ENCODE measurements at regions of chr22 and their contacts with region 1.

Region 1: DNA sequence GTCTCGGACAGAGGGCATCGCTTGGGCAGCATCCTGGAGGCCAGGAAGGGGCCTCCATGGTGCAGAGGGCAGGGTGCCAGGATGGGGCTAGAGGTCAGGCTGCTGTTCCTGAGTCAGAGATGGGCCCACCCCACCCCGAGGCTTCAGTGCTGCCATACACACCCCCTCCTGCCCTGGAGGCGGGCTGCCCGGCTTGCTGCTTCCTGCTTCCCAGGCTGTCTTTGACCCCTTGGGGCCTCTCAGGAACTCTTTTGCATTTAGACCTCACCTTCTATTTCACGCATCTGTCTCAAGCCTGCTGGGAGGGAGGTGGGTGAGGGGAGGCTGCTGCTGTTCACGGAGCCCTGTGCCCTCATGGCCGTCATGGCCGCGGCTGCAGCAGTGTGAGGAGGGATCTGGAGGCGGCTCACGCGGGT is 6.6 kb upstream of the GRAMD4 start:
- DNase-seq: peak; percentile 28
- ATAC-seq: peak; percentile 69
- H3K4me3 ChIP-seq: peak overlapping the region; percentile 60
- H3K27ac ChIP-seq: peak overlapping the region; percentile 83
- H3K4me1 ChIP-seq: peaks cover 19% of the 10 kb centered on the region
- H3K27me3 ChIP-seq: no peaks in the 10 kb centered on the region
- CTCF ChIP-seq: no peak
- EP300 ChIP-seq: 0 out of 4 replicates have a peak, but pooled peaks of 1 of the 2 experiments have one; percentile 10
- POLR2A ChIP-seq: 0 out of 2 replicates have a peak, but pooled peaks have one; percentile 45
- RAD21 ChIP-seq: no peak

Region 2: GRCh38 chr22:46576556-46577367 is 36.9 kb before region 1 on chr22:
- CTCF ChIA-PET with region 1: no interaction called
- POLR2A ChIA-PET with region 1: interaction called, 3 read pairs
- RAD21 ChIA-PET with region 1: interaction called, 3 read pairs
- SMC1A ChIA-PET with region 1: interaction called, 3 read pairs
- in situ Hi-C with region 1: no loop called
- intact Hi-C with region 1: loop called (anchors 5 kb)
- DNase-seq: no peak
- ATAC-seq: peak; percentile 9; the same call in 2 of the 3 replicates
- H3K4me3 ChIP-seq: no peak overlapping the region; the same call in 1 of the 2 replicates
- H3K27ac ChIP-seq: no peak overlapping the region
- H3K4me1 ChIP-seq: peaks cover 15% of the 10 kb centered on the region
- H3K27me3 ChIP-seq: no peaks in the 10 kb centered on the region; a peak in 1 of 4 replicates
- CTCF ChIP-seq: no peak
- EP300 ChIP-seq: no peak
- POLR2A ChIP-seq: 0 out of 2 replicates have a peak, but pooled peaks have one; percentile 37
- RAD21 ChIP-seq: no peak

Region 3: DNA sequence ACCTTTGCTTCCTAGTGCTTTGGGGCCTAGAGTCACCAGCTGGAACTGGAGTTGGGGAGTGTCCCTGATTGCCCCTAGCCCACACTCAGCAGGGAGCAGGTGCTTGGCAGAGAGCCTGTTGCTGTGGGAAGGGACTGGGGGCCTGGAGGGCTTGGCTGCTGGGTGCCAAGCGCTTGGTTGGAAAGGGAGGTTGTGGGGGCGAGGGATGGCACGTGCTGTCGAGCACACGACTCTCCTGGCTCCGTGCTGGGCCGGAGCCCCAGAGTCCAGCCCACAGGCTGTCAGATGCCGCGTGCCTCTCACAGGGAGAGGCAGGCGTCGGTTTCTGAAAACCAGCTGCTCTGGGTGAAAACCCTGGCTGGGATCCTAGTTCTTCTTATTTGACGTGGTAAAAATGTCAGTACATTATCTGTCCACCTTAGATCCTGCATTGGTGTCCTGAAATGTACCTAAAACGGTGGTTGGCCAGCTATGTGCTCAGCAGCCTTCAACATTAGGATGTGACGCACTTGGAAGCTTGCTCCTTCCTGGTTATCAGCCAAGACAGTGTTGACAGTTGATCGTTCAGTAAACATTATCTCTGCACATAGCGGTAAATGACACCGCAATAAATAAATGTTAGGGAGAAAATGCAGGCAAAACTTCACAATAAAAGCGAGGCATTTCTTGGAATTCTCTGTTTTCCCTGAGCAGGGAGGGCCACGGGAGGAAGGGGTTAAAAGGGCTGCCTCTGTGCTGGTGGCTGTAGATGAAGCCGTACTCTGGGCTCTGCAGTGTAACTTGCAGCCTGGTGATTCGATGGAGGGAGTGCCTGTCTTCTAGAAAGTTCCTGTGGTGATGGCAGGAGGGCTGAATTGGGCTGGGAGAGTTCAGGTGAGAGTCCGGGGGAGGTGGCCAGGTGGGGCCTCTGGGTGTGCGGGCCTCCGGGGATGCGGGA is 35.8 kb after region 1 on chr22:
- CTCF ChIA-PET with region 1: no interaction called
- POLR2A ChIA-PET with region 1: no interaction called
- RAD21 ChIA-PET with region 1: no interaction called
- SMC1A ChIA-PET with region 1: no interaction called
- in situ Hi-C with region 1: no loop called
- intact Hi-C with region 1: no loop called
- DNase-seq: no peak
- ATAC-seq: no peak
- H3K4me3 ChIP-seq: no peak overlapping the region
- H3K27ac ChIP-seq: no peak overlapping the region
- H3K4me1 ChIP-seq: peaks cover 7% of the 10 kb centered on the region
- H3K27me3 ChIP-seq: no peaks in the 10 kb centered on the region
- CTCF ChIP-seq: no peak
- EP300 ChIP-seq: no peak
- POLR2A ChIP-seq: no peak
- RAD21 ChIP-seq: no peak

Region 4: GRCh38 chr22:46674367-46674781 is 60.8 kb after region 1 on chr22:
- CTCF ChIA-PET with region 1: no interaction called
- POLR2A ChIA-PET with region 1: no interaction called
- RAD21 ChIA-PET with region 1: no interaction called
- SMC1A ChIA-PET with region 1: no interaction called
- in situ Hi-C with region 1: no loop called
- intact Hi-C with region 1: no loop called
- DNase-seq: no peak
- ATAC-seq: no peak
- H3K4me3 ChIP-seq: no peak overlapping the region
- H3K27ac ChIP-seq: no peak overlapping the region
- H3K4me1 ChIP-seq: peaks cover 8% of the 10 kb centered on the region
- H3K27me3 ChIP-seq: no peaks in the 10 kb centered on the region
- CTCF ChIP-seq: no peak
- EP300 ChIP-seq: no peak
- POLR2A ChIP-seq: no peak
- RAD21 ChIP-seq: no peak